ENCODE measurements at regions of chr7 and their contacts with region 1.

Region 1: GRCh38 chr7:135274495-135275268 is 41.0 kb downstream of the STRA8 start:
- DNase-seq: peak; percentile 85
- H3K4me3 ChIP-seq: no peak overlapping the region
- H3K27ac ChIP-seq: no peak overlapping the region
- H3K4me1 ChIP-seq: no peaks in the 10 kb centered on the region
- H3K27me3 ChIP-seq: no peaks in the 10 kb centered on the region; the same call in 1 of the 2 replicates
- CTCF ChIP-seq: peak; percentile 94
- EP300 ChIP-seq: no peak
- RAD21 ChIP-seq: peak; percentile 93

Region 2: GRCh38 chr7:134690016-134690415 is 584.7 kb before region 1 on chr7:
- CTCF ChIA-PET with region 1: interaction called, 10 read pairs
- POLR2A ChIA-PET with region 1: no interaction called
- DNase-seq: peak; percentile 50
- H3K4me3 ChIP-seq: no peak overlapping the region
- H3K27ac ChIP-seq: peak overlapping the region; percentile 82 to 88; a peak in 3 of 4 replicates
- H3K4me1 ChIP-seq: peaks cover 12 to 39% of the 10 kb centered on the region in 2 experiments
- H3K27me3 ChIP-seq: no peaks in the 10 kb centered on the region
- CTCF ChIP-seq: peak; percentile 95
- EP300 ChIP-seq: no peak
- RAD21 ChIP-seq: peak; percentile 88

Region 3: DNA sequence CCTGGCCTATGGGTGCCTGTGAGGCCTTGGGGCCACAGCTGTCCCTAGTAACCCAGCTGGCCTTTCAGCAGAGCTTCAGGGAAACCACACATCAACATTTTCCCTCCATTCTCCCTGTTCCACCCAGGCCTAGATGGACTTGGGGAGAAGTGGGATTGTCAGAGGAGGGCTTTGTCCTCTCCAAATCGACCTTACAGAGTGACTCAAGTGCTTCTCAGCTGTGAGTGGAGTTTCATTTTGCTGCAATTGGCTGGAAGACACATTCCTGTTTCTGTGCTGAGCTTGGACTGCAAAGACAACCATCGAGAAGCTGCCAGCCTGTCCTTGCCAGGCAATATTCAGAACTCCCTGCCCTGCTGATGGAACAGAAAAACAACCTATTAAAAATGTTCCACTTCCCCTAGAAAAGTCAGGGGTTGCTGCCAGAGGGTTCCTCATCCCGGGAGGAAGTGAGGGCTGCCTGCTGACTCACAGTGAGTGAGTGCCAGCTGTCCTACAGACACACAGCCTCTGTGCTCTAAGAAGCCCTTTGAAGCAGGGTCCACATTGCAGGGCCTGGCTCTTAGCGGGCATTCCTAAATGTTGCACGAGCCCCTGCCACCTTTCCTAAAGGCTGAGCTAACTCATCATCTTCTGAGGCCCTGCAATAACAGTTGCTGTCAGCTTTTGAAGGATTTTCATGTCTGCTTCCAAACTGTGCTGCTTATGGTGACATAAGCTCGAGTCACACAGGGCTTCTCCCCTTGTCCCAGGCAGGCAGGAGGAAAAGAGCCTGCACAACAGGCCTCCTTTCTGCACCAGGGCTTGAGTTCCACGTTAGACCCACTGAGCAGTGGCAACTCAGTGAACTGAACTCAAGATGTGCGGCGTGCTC is 20.5 kb before region 1 on chr7:
- CTCF ChIA-PET with region 1: interaction called, 21 read pairs
- POLR2A ChIA-PET with region 1: no interaction called
- DNase-seq: no peak
- H3K4me3 ChIP-seq: peak overlapping the region in 1 of 2 experiments; percentile 5; a peak in 2 of 4 replicates
- H3K27ac ChIP-seq: peak overlapping the region; percentile 45 to 73; a peak in 3 of 4 replicates
- H3K4me1 ChIP-seq: peaks cover 11 to 21% of the 10 kb centered on the region in 2 experiments; a peak in 3 of 4 replicates
- H3K27me3 ChIP-seq: no peaks in the 10 kb centered on the region
- CTCF ChIP-seq: no peak
- EP300 ChIP-seq: peak in 1 of 2 experiments; percentile 47; a peak in 1 of 4 replicates
- RAD21 ChIP-seq: no peak

Region 4: DNA sequence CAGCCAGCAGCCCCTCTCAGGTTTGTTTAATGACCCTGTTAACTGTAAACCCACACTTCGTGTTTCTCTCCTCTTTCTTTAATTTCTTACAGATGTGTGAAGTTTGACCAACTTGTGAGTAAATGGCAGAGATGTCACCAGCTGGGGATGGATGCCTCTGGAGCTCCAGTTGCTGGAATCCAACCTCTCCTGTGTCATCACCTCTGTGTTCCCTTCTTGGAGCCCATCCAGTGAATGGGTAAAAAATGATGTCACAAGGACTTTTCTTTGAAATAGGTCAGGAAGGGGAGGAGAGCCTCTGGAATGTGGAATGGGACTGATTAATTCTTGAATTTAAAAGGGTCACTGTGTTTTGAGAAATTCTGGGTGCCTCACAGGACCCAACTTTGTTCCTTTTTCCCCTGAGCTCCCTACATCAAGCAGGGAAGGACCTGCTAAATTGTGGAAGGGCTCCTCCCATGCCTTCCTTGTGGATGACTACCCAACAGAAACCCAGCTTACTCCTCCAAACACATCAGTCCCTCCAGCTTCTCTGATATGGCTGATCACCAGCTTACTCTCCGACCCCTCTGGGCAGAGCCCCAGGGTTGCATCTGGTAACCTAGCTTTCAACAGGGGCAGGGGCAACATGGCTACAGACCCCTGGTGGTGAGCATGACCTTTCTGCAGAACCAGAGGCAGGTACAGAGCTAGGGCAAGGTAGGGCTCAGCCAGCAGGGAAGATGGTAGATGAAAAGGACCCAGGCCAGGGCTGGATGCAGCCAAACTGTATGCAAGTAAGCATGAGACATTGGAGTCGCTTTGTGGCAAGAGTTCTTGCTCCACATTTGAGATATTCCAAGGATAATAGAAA is 26.5 kb after region 1 on chr7:
- CTCF ChIA-PET with region 1: interaction called, 15 read pairs
- POLR2A ChIA-PET with region 1: no interaction called
- DNase-seq: no peak
- H3K4me3 ChIP-seq: no peak overlapping the region
- H3K27ac ChIP-seq: no peak overlapping the region
- H3K4me1 ChIP-seq: peaks cover 0 to 6% of the 10 kb centered on the region in 2 experiments; a peak in 1 of 4 replicates
- H3K27me3 ChIP-seq: 0 out of 2 replicates have a peak, but pooled peaks cover 3% of the 10 kb centered on the region
- CTCF ChIP-seq: no peak
- EP300 ChIP-seq: no peak
- RAD21 ChIP-seq: no peak

Region 5: GRCh38 chr7:135355377-135356042 is 80.8 kb after region 1 on chr7:
- CTCF ChIA-PET with region 1: interaction called, 737 read pairs
- POLR2A ChIA-PET with region 1: no interaction called
- DNase-seq: no peak
- H3K4me3 ChIP-seq: no peak overlapping the region
- H3K27ac ChIP-seq: no peak overlapping the region
- H3K4me1 ChIP-seq: peaks cover 0 to 5% of the 10 kb centered on the region in 2 experiments; a peak in 1 of 4 replicates
- H3K27me3 ChIP-seq: no peaks in the 10 kb centered on the region
- CTCF ChIP-seq: no peak
- EP300 ChIP-seq: no peak
- RAD21 ChIP-seq: no peak

Region 6: DNA sequence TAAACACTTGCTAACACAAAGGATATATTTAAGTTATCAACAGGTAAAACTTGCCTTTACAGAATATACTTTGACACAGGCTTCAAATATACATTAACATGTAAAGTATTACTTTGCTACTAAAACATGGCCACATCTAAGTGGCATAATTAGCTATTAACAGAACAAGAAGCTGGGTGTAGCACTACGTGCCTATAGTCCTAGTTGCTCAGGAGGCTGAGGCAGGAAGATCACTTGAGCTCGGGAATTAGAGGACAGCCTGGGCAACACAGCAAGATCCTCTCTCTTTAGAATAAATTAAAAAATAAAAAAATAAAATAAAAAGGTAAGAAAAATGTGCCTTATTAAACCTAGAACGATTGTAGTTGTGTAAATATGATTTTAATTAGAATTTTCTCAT is 128.6 kb after region 1 on chr7:
- CTCF ChIA-PET with region 1: no interaction called
- POLR2A ChIA-PET with region 1: no interaction called
- DNase-seq: no peak
- H3K4me3 ChIP-seq: no peak overlapping the region
- H3K27ac ChIP-seq: no peak overlapping the region
- H3K4me1 ChIP-seq: no peaks in the 10 kb centered on the region; a peak in 1 of 4 replicates
- H3K27me3 ChIP-seq: no peaks in the 10 kb centered on the region
- CTCF ChIP-seq: no peak
- EP300 ChIP-seq: no peak
- RAD21 ChIP-seq: no peak

Region 7: GRCh38 chr7:135620980-135621850 is 346.5 kb after region 1 on chr7:
- CTCF ChIA-PET with region 1: interaction called, 12 read pairs
- POLR2A ChIA-PET with region 1: no interaction called
- DNase-seq: peak; percentile 66
- H3K4me3 ChIP-seq: no peak overlapping the region
- H3K27ac ChIP-seq: peak overlapping the region; percentile 23 to 69; a peak in 3 of 4 replicates
- H3K4me1 ChIP-seq: peaks cover 0 to 9% of the 10 kb centered on the region in 2 experiments; a peak in 2 of 4 replicates
- H3K27me3 ChIP-seq: no peaks in the 10 kb centered on the region
- CTCF ChIP-seq: peak; percentile 99
- EP300 ChIP-seq: peak in 1 of 2 experiments; percentile 34; a peak in 1 of 4 replicates
- RAD21 ChIP-seq: peak; percentile 80

Measured in SK-N-SH (cell line).